AG04449 (cell line): ENCODE measurements at regions of chr19 and their contacts with region 1.

Region 1: GRCh38 chr19:10644260-10645007 is 9.7 kb upstream of the ILF3 start:
- DNase-seq: no peak
- H3K4me3 ChIP-seq: no peak overlapping the region
- CTCF ChIP-seq: peak; percentile 93

Region 2: GRCh38 chr19:10403137-10404021 is 241.1 kb before region 1 on chr19 and contains the start of gene CDC37:
- CTCF ChIA-PET with region 1: interaction called, 11 read pairs
- POLR2A ChIA-PET with region 1: no interaction called
- DNase-seq: peak; percentile 63
- H3K4me3 ChIP-seq: peak within 1 kb of the TSS; percentile 98
- CTCF ChIP-seq: no peak

Region 3: GRCh38 chr19:10565567-10566407 is 78.6 kb before region 1 on chr19 and contains the start of gene KRI1:
- CTCF ChIA-PET with region 1: interaction called, 644 read pairs
- POLR2A ChIA-PET with region 1: no interaction called
- DNase-seq: peak; percentile 67
- H3K4me3 ChIP-seq: peak within 1 kb of the TSS; percentile 98
- CTCF ChIP-seq: peak; percentile 53

Region 4: DNA sequence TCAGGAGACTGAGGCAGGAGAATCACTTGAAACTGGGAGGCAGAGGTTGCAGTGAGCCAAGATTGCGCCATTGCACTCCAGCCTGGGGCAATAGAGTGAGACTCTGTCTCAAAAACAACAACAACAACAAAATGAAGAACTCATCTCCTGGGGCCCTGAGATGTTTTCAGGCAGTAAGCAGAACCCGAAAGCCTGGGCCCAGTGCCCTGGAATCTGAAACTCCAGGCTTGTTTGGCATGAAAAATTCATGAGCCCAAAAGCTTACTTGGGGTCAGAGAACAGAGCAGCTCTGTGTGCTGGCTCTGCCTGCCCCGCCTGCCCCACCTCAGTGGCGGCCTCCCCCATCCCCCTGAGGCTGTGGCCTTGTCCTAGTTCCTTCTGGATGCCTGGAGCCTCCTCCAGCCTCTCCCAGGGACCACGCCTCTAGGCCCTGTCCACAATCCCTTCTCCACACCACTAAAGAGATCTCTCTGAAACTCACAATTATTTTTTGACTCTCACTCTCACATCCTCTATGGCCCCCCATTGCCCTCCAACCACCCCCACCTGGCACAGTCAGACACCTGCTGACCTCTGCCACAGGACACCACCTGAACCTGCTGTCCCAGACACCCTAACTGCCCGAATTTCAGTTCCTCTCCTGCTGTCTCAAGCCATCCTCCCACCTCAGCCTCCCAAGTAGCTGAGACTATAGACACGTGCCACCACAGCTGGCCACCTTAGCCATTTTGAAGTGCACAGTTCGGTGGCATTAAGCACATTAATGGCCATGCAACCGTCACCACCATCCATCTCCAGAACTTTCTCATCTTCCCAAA is 50.4 kb before region 1 on chr19:
- CTCF ChIA-PET with region 1: interaction called, 31 read pairs
- POLR2A ChIA-PET with region 1: no interaction called
- DNase-seq: no peak
- H3K4me3 ChIP-seq: no peak overlapping the region
- CTCF ChIP-seq: no peak

Region 5: GRCh38 chr19:10612491-10613119 is 31.8 kb before region 1 on chr19:
- CTCF ChIA-PET with region 1: interaction called, 13 read pairs
- POLR2A ChIA-PET with region 1: no interaction called
- DNase-seq: no peak
- H3K4me3 ChIP-seq: no peak overlapping the region
- CTCF ChIP-seq: no peak

Region 6: DNA sequence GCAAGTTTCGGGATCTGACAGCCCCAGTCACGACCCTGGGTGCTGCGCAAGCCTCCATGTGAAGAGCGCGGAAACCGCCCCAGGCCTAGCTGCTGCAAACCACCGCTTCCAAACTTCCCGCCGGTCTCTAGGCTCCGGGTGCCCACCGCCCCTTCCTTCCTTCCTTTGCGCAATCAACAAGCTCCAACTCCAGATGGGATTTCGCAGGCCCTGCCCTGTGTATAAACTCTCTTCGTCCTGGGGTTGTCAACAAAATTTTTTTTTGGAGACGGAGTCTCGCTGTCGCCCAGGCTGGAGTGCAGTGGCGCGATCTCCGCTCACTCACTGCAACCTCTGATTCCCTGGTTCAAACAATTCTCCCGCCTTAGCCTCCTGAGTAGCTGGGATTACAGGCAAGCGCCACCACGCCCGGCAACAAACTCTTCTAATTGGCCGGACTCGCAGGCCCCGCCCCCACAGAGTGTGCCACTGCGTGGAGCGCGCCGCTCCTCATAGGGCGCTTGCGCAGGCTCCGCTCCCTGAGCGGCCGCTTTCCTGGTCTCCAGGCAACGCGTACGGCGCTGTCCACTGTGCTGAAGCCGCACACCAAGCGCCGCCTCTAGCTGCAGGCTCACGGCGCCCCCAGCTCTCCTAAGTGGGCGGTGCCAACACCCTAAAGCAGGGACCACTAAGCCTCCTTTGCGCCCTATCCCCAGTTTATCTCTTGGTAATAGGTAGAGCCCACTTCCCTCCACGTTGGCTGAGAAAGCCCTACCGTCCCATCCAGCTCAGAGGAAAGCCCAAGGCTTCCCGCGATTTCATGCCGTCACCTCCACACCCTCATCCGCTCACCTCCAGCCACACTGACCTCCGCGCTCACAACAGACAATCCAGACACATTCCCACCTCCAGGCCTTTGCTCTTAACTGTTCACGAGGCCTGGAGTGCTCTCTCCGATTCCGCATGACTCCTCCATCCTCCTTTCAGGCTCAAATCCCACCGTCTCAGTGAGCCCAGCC is 51.3 kb after region 1 on chr19:
- CTCF ChIA-PET with region 1: interaction called, 11 read pairs
- POLR2A ChIA-PET with region 1: no interaction called
- DNase-seq: no peak
- H3K4me3 ChIP-seq: peak overlapping the region; percentile 27
- CTCF ChIP-seq: no peak

Region 7: DNA sequence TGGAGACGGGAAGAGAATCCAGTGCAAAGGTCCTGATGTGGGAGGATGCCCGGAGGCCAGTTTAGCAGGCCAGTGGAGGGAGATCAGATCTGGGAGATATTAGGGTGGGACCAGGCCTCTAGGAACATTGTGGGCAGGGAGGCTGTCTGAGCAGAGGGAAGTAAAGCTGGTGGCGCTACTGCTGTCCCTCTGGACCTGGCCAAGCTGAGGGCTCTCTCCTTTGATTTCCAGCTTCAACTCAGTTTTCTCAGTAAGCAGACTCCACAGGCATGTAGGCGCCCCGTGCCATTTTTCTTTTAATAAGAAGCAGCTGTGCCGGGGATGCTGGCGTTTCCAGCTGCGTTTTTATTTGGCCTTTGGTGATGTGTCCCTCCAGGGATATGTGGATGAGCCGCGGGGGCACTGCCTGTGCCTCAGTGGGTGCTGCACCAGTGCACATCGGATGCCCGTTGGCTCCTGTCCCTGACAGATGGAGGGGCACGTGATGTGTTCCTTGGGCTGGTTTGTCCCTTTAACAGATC is 80.2 kb after region 1 on chr19:
- CTCF ChIA-PET with region 1: no interaction called
- POLR2A ChIA-PET with region 1: no interaction called
- DNase-seq: no peak
- H3K4me3 ChIP-seq: 0 out of 2 replicates have a peak overlapping the region, but pooled peaks have one; percentile 12
- CTCF ChIP-seq: no peak

Region 8: DNA sequence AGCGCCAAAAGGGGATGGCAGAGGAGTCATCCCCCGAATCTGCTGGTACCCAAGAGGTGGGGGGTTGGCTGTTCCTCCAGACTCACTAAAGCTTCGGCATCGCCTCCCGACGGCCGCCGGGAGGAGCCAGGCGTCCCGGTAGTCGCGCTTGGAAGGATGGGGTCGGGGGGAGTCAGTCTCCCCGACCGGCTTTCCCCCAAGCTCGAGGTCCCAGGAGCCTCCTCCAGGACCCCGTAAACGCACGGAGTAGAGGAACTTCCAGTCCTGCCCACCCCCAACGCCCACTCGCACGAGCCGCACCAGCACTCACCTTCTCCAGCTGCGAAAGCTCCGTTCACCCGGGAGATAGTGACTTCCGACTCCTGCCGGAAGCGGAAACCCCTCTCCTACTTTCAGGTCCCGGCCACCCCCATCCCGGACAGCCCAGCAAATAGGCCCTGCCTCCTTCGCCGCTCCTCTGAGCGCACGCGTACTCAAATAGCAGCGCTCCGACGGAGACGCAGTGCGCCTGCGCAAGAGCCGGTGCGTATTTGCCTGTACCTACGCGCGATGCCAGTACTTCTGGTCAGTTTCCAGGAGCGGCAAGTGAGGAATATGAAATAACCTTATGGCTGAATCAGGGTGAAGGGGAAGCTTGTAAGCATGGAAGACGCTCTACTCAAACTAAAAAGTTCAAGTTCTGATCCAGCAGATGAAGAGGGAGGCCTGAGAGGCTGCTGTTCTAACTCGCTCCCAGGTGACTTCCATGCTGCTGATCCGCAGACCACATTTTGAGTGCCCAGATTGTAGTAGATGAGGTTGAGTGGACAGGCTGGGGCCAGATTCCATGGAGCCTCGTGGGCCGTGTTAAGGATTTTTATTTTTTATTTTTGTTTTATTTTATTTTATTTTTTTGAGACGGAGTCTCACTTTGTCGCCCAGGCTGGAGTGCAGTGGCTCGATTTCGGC is 914.7 kb after region 1 on chr19 and contains the start of gene ELOF1:
- CTCF ChIA-PET with region 1: no interaction called
- POLR2A ChIA-PET with region 1: no interaction called
- DNase-seq: peak; percentile 79
- H3K4me3 ChIP-seq: peak within 1 kb of the TSS; percentile 87
- CTCF ChIP-seq: peak; percentile 37